ENCODE measurements at regions of chr12 and their contacts with region 1.

Region 1: GRCh38 chr12:54017878-54018467 is 9.2 kb downstream of the HOXC8 start:
- DNase-seq: peak; percentile 84
- ATAC-seq: peak; percentile 80
- H3K4me3 ChIP-seq: peak overlapping the region; percentile 76 to 88
- H3K27ac ChIP-seq: peak overlapping the region; percentile 94
- H3K4me1 ChIP-seq: peaks cover 24 to 44% of the 10 kb centered on the region in 2 experiments
- H3K27me3 ChIP-seq: no peaks in the 10 kb centered on the region
- CTCF ChIP-seq: no peak
- POLR2A ChIP-seq: peak; percentile 56
- RAD21 ChIP-seq: no peak

Region 2: DNA sequence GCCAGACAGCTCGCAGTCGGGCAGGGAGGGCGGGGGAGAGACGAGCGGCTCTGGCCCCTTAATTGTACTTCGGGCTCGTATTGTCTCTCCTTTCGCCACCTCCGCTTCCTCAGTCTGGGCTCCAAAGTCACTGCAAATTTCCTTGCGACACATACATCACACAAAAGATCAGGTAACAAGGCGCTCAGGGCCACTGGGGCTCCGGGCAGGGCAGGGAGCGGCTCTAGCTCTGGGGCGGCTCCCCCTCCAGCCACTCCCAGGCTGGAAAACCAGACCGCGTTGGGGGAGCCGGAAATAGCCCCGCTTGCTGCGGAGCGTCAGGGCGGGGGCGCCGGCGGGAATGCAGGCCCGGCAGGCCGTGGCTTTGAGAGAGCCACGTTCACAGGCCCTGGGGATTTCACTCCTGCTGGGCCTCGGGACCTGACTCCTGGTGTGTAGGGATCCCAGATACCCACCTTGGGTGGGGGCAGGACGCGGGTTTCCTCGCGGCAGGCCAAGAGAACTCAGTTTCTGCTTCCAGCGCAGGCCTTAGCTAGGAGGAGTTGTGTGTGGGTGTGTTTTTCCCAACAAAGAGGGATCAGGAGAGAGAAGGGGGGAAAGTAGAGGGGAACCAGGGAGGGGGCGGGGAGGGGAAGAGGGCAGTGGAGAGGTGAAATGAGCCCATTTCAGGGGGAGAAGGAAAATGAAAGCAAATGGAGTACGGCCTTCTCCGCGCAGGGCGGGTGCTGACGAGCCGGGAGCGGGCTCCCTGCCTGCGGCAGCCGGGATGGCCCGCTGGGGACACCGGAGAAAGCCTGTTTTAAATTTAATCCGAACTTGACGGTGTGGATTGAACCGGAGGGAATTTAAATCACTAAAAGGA is 22.4 kb before region 1 on chr12:
- CTCF ChIA-PET with region 1: interaction called, 5 read pairs
- POLR2A ChIA-PET with region 1: interaction called, 23 read pairs
- RAD21 ChIA-PET with region 1: interaction called in 1 of 2 experiments, 4 read pairs
- intact Hi-C with region 1: no loop called
- DNase-seq: no peak
- ATAC-seq: peak; percentile 78
- H3K4me3 ChIP-seq: peak overlapping the region; percentile 78 to 85
- H3K27ac ChIP-seq: peak overlapping the region; percentile 81
- H3K4me1 ChIP-seq: peaks cover 17 to 35% of the 10 kb centered on the region in 2 experiments; a peak in 3 of 4 replicates
- H3K27me3 ChIP-seq: no peaks in the 10 kb centered on the region
- CTCF ChIP-seq: no peak
- POLR2A ChIP-seq: peak; percentile 61
- RAD21 ChIP-seq: no peak

Region 3: DNA sequence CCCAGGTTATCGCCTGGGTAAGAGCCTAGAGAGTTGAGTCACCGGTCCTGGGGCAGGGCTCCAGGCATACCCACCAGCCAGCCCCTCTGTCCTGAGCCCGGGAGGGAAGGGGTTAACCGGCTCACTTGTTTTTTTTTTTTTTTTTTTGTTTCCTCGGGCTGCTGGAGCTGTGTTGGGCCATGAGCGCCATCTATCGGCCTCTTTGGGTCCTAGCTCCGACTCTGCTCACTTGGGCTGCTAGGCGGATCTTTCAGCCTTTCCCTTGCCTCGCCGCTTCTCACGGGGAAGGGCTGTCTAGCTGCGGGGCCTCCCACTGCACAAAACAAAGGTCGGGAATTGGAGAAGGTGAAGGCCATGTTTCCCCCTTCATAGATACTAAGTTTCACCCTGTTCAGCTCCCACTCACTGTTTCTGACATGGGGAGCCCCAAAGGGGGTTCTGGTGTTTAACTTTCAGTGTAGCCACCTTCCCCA is 173.6 kb after region 1 on chr12:
- CTCF ChIA-PET with region 1: interaction called, 20 read pairs
- POLR2A ChIA-PET with region 1: interaction called, 6 read pairs
- RAD21 ChIA-PET with region 1: interaction called in 1 of 2 experiments, 6 read pairs
- intact Hi-C with region 1: no loop called
- DNase-seq: peak; percentile 77
- ATAC-seq: peak; percentile 71
- H3K4me3 ChIP-seq: no peak overlapping the region
- H3K27ac ChIP-seq: no peak overlapping the region
- H3K4me1 ChIP-seq: peaks cover 5 to 33% of the 10 kb centered on the region in 2 experiments
- H3K27me3 ChIP-seq: no peaks in the 10 kb centered on the region
- CTCF ChIP-seq: peak; percentile 80 to 92 (median 90)
- POLR2A ChIP-seq: no peak
- RAD21 ChIP-seq: peak; percentile 89